Ascending aorta (tissue), 2 donors: ENCODE measurements at regions of chr11 and their contacts with region 1.

Region 1: DNA sequence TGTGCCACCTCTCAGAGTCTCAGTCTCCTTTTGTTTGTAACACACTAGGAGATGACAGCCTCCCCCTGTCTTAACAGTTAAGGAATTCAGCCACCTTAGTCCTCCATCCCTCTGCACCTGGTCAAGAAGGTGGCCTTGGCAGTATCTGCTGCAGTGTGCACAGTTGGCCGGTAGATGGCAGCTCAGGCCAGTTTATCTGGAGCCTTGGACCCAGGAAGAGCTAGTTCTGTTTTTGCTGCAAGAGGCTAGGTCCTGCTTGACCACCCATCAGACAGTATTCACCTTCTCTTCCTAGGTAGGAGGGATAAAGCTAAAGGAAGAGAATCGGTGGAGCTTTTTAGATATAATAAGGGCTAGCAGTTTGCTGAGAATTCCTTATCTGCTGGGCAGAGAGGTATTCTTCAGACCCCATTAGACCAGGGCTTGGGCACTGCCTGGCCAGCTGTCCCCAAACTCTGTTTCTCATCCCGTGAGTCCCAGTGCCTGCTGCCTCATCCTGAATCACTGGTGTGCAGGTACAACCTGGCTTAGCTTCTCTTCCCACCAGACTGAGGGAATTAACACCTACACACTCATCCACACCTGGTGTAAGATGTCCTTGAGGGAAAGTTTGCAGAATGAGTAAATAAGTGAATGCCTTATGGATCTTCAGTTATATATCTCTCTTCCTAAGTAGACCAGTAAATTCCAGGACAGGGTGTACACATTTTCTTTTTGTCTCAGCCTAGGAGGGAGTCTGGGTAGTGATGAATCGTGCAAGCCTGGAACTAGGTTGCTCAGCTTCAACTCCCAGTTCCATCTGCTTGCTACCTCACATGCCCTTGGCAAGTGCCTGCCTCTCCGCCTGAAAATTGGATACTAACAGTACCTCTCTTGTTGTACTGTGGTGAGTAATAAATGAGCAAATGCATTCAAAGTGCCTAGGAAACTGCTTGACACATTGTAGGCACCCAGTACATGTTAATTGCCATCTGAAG is 70.8 kb upstream of the NARS2 start:
- DNase-seq: peak in 1 of 2 donors; percentile 70
- H3K4me3 ChIP-seq: no peak overlapping the region
- H3K27ac ChIP-seq: no peak overlapping the region
- H3K4me1 ChIP-seq: no peaks in the 10 kb centered on the region
- H3K27me3 ChIP-seq: no peaks in the 10 kb centered on the region
- CTCF ChIP-seq: peak; percentile 87 to 97 (median 94)

Region 2: GRCh38 chr11:78698612-78699011 is 53.1 kb after region 1 on chr11:
- intact Hi-C with region 1: loop called (anchors 5 kb)
- DNase-seq: peak; percentile 71 to 95
- H3K4me3 ChIP-seq: no peak overlapping the region
- H3K27ac ChIP-seq: peak overlapping the region; percentile 65 to 77
- H3K4me1 ChIP-seq: peaks cover 6 to 11% of the 10 kb centered on the region in 2 donors
- H3K27me3 ChIP-seq: no peaks in the 10 kb centered on the region
- CTCF ChIP-seq: no peak

Region 3: GRCh38 chr11:78715639-78716311 is 70.3 kb after region 1 on chr11:
- intact Hi-C with region 1: loop called (anchors 1 kb)
- DNase-seq: peak; percentile 14 to 79
- H3K4me3 ChIP-seq: no peak overlapping the region
- H3K27ac ChIP-seq: no peak overlapping the region
- H3K4me1 ChIP-seq: no peaks in the 10 kb centered on the region
- H3K27me3 ChIP-seq: no peaks in the 10 kb centered on the region
- CTCF ChIP-seq: peak; percentile 64 to 87 (median 68)

Region 4: GRCh38 chr11:79076526-79077115 is 431.1 kb after region 1 on chr11:
- intact Hi-C with region 1: loop called (anchors 5 kb)
- DNase-seq: no peak
- H3K4me3 ChIP-seq: no peak overlapping the region
- H3K27ac ChIP-seq: no peak overlapping the region
- H3K4me1 ChIP-seq: peaks cover 0 to 2% of the 10 kb centered on the region in 2 donors
- H3K27me3 ChIP-seq: no peaks in the 10 kb centered on the region
- CTCF ChIP-seq: peak; percentile 19 to 59 (median 44)